ENCODE measurements at regions of chr12 and their contacts with region 1.

Region 1: GRCh38 chr12:95784286-95784685 is 6.3 kb downstream of the NTN4 start:
- DNase-seq: no peak
- H3K4me3 ChIP-seq: no peak overlapping the region
- CTCF ChIP-seq: no peak

Region 2: DNA sequence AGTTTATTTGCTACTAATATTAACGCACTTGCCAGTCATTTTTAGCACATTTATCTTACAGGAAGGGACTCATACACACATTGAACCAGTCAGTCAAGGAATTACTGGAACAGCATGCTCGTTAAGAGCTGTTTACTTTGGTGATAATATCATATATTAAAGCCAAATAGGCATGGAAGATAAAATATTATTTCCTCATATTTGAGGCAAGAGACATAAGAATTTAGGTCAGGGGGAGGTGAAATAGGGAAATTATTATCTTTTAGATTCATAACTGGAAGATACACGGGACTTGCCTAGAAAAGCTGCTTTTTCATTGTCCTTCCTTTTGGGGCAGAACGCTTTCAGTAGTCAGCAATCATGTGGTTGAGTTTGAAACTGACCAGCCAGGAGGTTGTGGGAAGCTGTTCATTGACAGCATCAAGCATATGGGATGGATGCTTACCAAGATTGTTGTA is 66.3 kb before region 1 on chr12:
- in situ Hi-C with region 1: no loop called
- DNase-seq: no peak
- H3K4me3 ChIP-seq: no peak overlapping the region
- CTCF ChIP-seq: no peak

Region 3: GRCh38 chr12:95733141-95733825 is 51.0 kb before region 1 on chr12:
- in situ Hi-C with region 1: loop called (anchors 5 kb)
- DNase-seq: peak; percentile 65
- H3K4me3 ChIP-seq: no peak overlapping the region
- CTCF ChIP-seq: no peak

Region 4: GRCh38 chr12:95838125-95838524 is 53.8 kb after region 1 on chr12:
- in situ Hi-C with region 1: no loop called
- DNase-seq: peak; percentile 62
- H3K4me3 ChIP-seq: no peak overlapping the region
- CTCF ChIP-seq: no peak

Measured in astrocyte of the cerebellum (primary cell).